Heart left ventricle (tissue), 16 donors: ENCODE measurements at regions of chr4 and their contacts with region 1.

Region 1: DNA sequence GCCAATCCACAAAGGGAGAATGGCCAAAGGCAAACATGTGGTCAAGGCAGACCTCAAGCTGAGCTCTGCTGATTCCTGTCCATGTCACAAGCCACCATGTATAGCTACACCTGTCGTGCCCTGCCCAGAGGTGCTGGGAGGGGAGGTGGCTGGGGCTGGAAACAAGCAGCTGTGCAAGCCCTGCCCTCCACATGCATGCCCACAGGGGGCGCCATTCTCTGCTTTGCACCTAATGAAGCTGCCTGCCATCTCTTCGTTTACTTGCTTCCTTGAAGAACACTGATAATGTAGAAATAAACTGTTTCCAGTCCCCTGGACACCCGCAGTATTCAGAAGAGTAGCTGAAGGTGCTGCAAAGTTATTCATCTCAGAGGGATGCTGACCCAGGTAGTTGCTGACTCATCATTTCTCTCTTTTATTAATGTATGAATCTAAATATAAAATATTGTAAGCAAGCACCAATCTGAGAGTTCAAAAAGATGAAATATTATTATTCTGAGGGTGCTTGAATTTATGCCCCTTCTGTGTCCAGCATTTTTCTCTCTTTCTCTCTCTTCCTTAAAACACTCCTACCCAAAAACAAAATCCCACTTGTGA is 278.6 kb downstream of the ADGRA3 start:
- DNase-seq: peak in 1 of 5 donors; percentile 23
- ATAC-seq: no peak
- H3K4me3 ChIP-seq: no peak overlapping the region
- H3K27ac ChIP-seq: no peak overlapping the region
- H3K4me1 ChIP-seq: no peaks in the 10 kb centered on the region
- H3K27me3 ChIP-seq: peaks cover 0 to 19% (median 0%) of the 10 kb centered on the region in 9 donors
- CTCF ChIP-seq: peak in 5 of 12 donors; percentile 13 to 32 (median 19)
- POLR2A ChIP-seq: no peak

Region 2: DNA sequence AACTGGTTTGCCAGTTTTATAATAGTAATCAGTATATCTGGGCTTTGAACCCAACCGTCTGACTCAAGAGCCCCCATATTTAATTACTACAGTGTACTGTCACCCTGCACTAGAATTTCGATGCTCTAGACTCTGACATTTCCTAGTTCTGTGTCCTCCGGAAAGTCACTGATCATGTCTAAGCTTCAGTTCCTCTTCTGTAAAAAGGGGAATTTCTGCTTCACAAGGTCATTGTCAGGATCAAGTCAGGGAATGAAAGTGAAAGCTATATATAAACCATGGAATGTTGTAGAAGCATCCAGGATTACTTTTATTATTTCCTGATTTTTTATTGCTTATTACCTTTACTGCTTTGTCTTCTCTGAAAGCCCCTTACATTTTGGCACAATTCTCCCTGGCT is 284.7 kb before region 1 on chr4:
- intact Hi-C with region 1: no loop called
- DNase-seq: no peak
- ATAC-seq: no peak
- H3K4me3 ChIP-seq: no peak overlapping the region
- H3K27ac ChIP-seq: no peak overlapping the region
- H3K4me1 ChIP-seq: peaks cover 0 to 9% (median 0%) of the 10 kb centered on the region in 12 donors
- H3K27me3 ChIP-seq: peaks cover 0 to 27% (median 9%) of the 10 kb centered on the region in 9 donors
- CTCF ChIP-seq: no peak
- POLR2A ChIP-seq: no peak

Region 3: GRCh38 chr4:22334155-22334554 is 96.9 kb after region 1 on chr4:
- intact Hi-C with region 1: loop called in 1 of 10 experiments (anchors 5 kb)
- DNase-seq: no peak
- ATAC-seq: no peak
- H3K4me3 ChIP-seq: no peak overlapping the region
- H3K27ac ChIP-seq: no peak overlapping the region
- H3K4me1 ChIP-seq: peaks cover 0 to 4% (median 0%) of the 10 kb centered on the region in 12 donors
- H3K27me3 ChIP-seq: no peaks in the 10 kb centered on the region
- CTCF ChIP-seq: no peak
- POLR2A ChIP-seq: no peak